Activated CD4-positive, alpha-beta memory T cell treated with anti-CD3 and anti-CD28 coated beads for 36 hours (primary cell): ENCODE measurements at regions of chr16 and their contacts with region 1.

Region 1: GRCh38 chr16:71845639-71846430 is at the start of gene ATXN1L:
- DNase-seq: peak; percentile 95
- H3K4me3 Mint-ChIP-seq: peak within 1 kb of the TSS; percentile 91
- H3K27ac Mint-ChIP-seq: peak within 1 kb of the TSS; percentile 92
- H3K4me1 Mint-ChIP-seq: peaks cover 41% of the 10 kb centered on the region
- H3K27me3 Mint-ChIP-seq: no peaks in the 10 kb centered on the region
- total RNA-seq, gene ATXN1L: 14.6 to 15.1 TPM

Region 2: DNA sequence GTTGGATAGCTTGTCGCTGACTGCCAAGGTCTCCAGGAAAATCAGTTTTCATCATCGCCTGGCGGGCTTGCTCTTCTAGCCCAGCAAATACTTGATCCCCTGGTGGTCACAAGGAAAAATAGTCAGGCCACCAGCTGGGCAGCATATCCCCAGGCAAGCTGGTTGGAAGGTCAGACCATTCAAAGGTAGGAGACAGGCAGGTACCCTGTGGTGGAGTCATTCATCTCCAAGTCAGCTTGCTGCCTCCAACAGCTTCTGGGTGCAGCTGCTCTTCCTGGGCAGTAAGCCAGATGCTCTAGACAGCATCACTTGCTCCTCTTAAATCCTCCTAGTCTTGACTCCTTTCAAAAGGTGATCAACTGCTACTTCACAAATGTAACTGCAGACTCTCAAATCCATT is 22.1 kb after region 1 on chr16:
- CTCF ChIA-PET with region 1: no interaction called
- POLR2A ChIA-PET with region 1: no interaction called
- intact Hi-C with region 1: loop called (anchors 1 kb)
- DNase-seq: no peak
- H3K4me3 Mint-ChIP-seq: no peak overlapping the region
- H3K27ac Mint-ChIP-seq: no peak overlapping the region
- H3K4me1 Mint-ChIP-seq: peaks cover 34% of the 10 kb centered on the region
- H3K27me3 Mint-ChIP-seq: no peaks in the 10 kb centered on the region

Region 3: GRCh38 chr16:71894921-71895678 is 49.3 kb after region 1 on chr16 and contains the start of gene IST1:
- CTCF ChIA-PET with region 1: no interaction called
- POLR2A ChIA-PET with region 1: interaction called, 3 read pairs
- intact Hi-C with region 1: loop called (anchors 1 kb)
- DNase-seq: peak; percentile 99
- H3K4me3 Mint-ChIP-seq: peak within 1 kb of the TSS; percentile 95
- H3K27ac Mint-ChIP-seq: peak within 1 kb of the TSS; percentile 97
- H3K4me1 Mint-ChIP-seq: peaks cover 27% of the 10 kb centered on the region
- H3K27me3 Mint-ChIP-seq: no peaks in the 10 kb centered on the region
- total RNA-seq, gene IST1: 191 to 192 TPM

Region 4: GRCh38 chr16:71954699-71955195 is 108.9 kb after region 1 on chr16:
- CTCF ChIA-PET with region 1: no interaction called
- POLR2A ChIA-PET with region 1: no interaction called
- intact Hi-C with region 1: no loop called
- DNase-seq: no peak
- H3K4me3 Mint-ChIP-seq: no peak overlapping the region
- H3K27ac Mint-ChIP-seq: no peak overlapping the region
- H3K4me1 Mint-ChIP-seq: peaks cover 11% of the 10 kb centered on the region
- H3K27me3 Mint-ChIP-seq: peaks cover 2% of the 10 kb centered on the region

Region 5: GRCh38 chr16:72332926-72333325 is 487.1 kb after region 1 on chr16:
- CTCF ChIA-PET with region 1: no interaction called
- POLR2A ChIA-PET with region 1: no interaction called
- intact Hi-C with region 1: no loop called
- DNase-seq: no peak
- H3K4me3 Mint-ChIP-seq: no peak overlapping the region
- H3K27ac Mint-ChIP-seq: no peak overlapping the region
- H3K4me1 Mint-ChIP-seq: no peaks in the 10 kb centered on the region
- H3K27me3 Mint-ChIP-seq: no peaks in the 10 kb centered on the region